ENCODE measurements at regions of chr3 and their contacts with region 1.

Region 1: GRCh38 chr3:30693470-30694120 is 87.2 kb downstream of the TGFBR2 start:
- DNase-seq: peak in 10 of 14 experiments; percentile 12 to 83 (median 37)
- ATAC-seq: peak; percentile 94
- H3K4me3 ChIP-seq: no peak overlapping the region
- H3K4me3 Mint-ChIP-seq: no peak overlapping the region
- H3K27ac ChIP-seq: no peak overlapping the region
- H3K27ac Mint-ChIP-seq: peak overlapping the region; percentile 79
- H3K4me1 ChIP-seq: peaks cover 19% of the 10 kb centered on the region
- H3K4me1 Mint-ChIP-seq: peaks cover 86% of the 10 kb centered on the region
- H3K27me3 ChIP-seq: no peaks in the 10 kb centered on the region
- H3K27me3 Mint-ChIP-seq: no peaks in the 10 kb centered on the region
- CTCF ChIP-seq: peak; percentile 90

Region 2: GRCh38 chr3:30112902-30113484 is 580.6 kb before region 1 on chr3:
- CTCF ChIA-PET with region 1: interaction called, 4 read pairs
- POLR2A ChIA-PET with region 1: no interaction called
- intact Hi-C with region 1: loop called (anchors 1 to 2 kb)
- DNase-seq: peak in 3 of 14 experiments; percentile 56 to 57 (median 57)
- ATAC-seq: no peak
- H3K4me3 ChIP-seq: no peak overlapping the region
- H3K4me3 Mint-ChIP-seq: no peak overlapping the region
- H3K27ac ChIP-seq: no peak overlapping the region
- H3K27ac Mint-ChIP-seq: no peak overlapping the region
- H3K4me1 ChIP-seq: no peaks in the 10 kb centered on the region
- H3K4me1 Mint-ChIP-seq: peaks cover 7% of the 10 kb centered on the region
- H3K27me3 ChIP-seq: no peaks in the 10 kb centered on the region
- H3K27me3 Mint-ChIP-seq: peaks cover 5% of the 10 kb centered on the region
- CTCF ChIP-seq: peak; percentile 73

Region 3: DNA sequence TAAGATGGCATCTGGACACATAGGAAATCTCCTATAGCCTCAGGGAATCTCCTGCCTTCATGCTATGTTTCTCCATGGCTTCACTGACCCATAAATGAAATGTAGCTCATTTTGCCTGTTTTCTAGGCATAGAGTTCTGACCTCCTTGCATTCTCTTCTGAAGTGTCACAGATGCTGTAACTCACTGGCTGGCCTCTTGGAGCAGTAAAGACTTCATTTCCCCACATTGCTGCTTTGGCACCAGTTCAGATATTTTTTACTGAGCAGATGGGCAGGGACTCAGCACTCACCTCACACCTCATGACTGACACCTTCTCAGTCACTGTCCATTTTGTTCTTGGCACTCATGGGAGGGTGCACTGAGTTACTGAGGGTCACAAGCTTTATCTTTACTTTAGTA is 373.9 kb before region 1 on chr3:
- CTCF ChIA-PET with region 1: interaction called, 11 read pairs
- POLR2A ChIA-PET with region 1: interaction called, 3 read pairs
- intact Hi-C with region 1: loop called (anchors 1 to 2 kb)
- DNase-seq: peak in 13 of 14 experiments; percentile 4 to 73 (median 24)
- ATAC-seq: peak; percentile 97
- H3K4me3 ChIP-seq: no peak overlapping the region
- H3K4me3 Mint-ChIP-seq: no peak overlapping the region
- H3K27ac ChIP-seq: no peak overlapping the region
- H3K27ac Mint-ChIP-seq: peak overlapping the region; percentile 1
- H3K4me1 ChIP-seq: no peaks in the 10 kb centered on the region
- H3K4me1 Mint-ChIP-seq: peaks cover 13% of the 10 kb centered on the region
- H3K27me3 ChIP-seq: no peaks in the 10 kb centered on the region
- H3K27me3 Mint-ChIP-seq: no peaks in the 10 kb centered on the region
- CTCF ChIP-seq: peak; percentile 56

Region 4: GRCh38 chr3:30511524-30512278 is 181.9 kb before region 1 on chr3:
- CTCF ChIA-PET with region 1: no interaction called
- POLR2A ChIA-PET with region 1: no interaction called
- intact Hi-C with region 1: loop called in 1 of 2 experiments (anchors 10 kb)
- DNase-seq: no peak
- ATAC-seq: no peak
- H3K4me3 ChIP-seq: no peak overlapping the region
- H3K4me3 Mint-ChIP-seq: no peak overlapping the region
- H3K27ac ChIP-seq: no peak overlapping the region
- H3K27ac Mint-ChIP-seq: no peak overlapping the region
- H3K4me1 ChIP-seq: peaks cover 6% of the 10 kb centered on the region
- H3K4me1 Mint-ChIP-seq: peaks cover 11% of the 10 kb centered on the region
- H3K27me3 ChIP-seq: no peaks in the 10 kb centered on the region
- H3K27me3 Mint-ChIP-seq: no peaks in the 10 kb centered on the region
- CTCF ChIP-seq: no peak

Region 5: GRCh38 chr3:30628901-30629590 is 64.5 kb before region 1 on chr3:
- CTCF ChIA-PET with region 1: interaction called, 13 read pairs
- POLR2A ChIA-PET with region 1: interaction called, 4 read pairs
- intact Hi-C with region 1: loop called in 1 of 2 experiments (anchors 10 kb)
- DNase-seq: peak in 4 of 14 experiments; percentile 43 to 75 (median 73)
- ATAC-seq: peak; percentile 32
- H3K4me3 ChIP-seq: no peak overlapping the region
- H3K4me3 Mint-ChIP-seq: peak overlapping the region; percentile 68
- H3K27ac ChIP-seq: peak overlapping the region; percentile 77 to 90
- H3K27ac Mint-ChIP-seq: peak overlapping the region; percentile 96
- H3K4me1 ChIP-seq: peaks cover 74% of the 10 kb centered on the region
- H3K4me1 Mint-ChIP-seq: peaks cover 100% of the 10 kb centered on the region
- H3K27me3 ChIP-seq: no peaks in the 10 kb centered on the region
- H3K27me3 Mint-ChIP-seq: no peaks in the 10 kb centered on the region
- CTCF ChIP-seq: peak; percentile 40

Region 6: GRCh38 chr3:30658328-30659052 is 35.1 kb before region 1 on chr3:
- CTCF ChIA-PET with region 1: interaction called, 9 read pairs
- POLR2A ChIA-PET with region 1: interaction called, 8 read pairs
- intact Hi-C with region 1: loop called in 1 of 2 experiments (anchors 2 kb)
- DNase-seq: peak in 13 of 14 experiments; percentile 28 to 83 (median 47)
- ATAC-seq: peak; percentile 54
- H3K4me3 ChIP-seq: peak overlapping the region; percentile 6
- H3K4me3 Mint-ChIP-seq: peak overlapping the region; percentile 88
- H3K27ac ChIP-seq: peak overlapping the region; percentile 85 to 96
- H3K27ac Mint-ChIP-seq: peak overlapping the region; percentile 96
- H3K4me1 ChIP-seq: peaks cover 80% of the 10 kb centered on the region
- H3K4me1 Mint-ChIP-seq: peaks cover 93% of the 10 kb centered on the region
- H3K27me3 ChIP-seq: no peaks in the 10 kb centered on the region
- H3K27me3 Mint-ChIP-seq: no peaks in the 10 kb centered on the region
- CTCF ChIP-seq: no peak